Brain microvascular endothelial cell (primary cell): ENCODE measurements at regions of chr3 and their contacts with region 1.

Region 1: GRCh38 chr3:159616212-159616825 is 372.3 kb upstream of the IL12A start:
- DNase-seq: peak; percentile 65
- H3K4me3 ChIP-seq: no peak overlapping the region
- H3K27ac ChIP-seq: no peak overlapping the region
- H3K27me3 ChIP-seq: no peaks in the 10 kb centered on the region
- CTCF ChIP-seq: peak; percentile 78

Region 2: DNA sequence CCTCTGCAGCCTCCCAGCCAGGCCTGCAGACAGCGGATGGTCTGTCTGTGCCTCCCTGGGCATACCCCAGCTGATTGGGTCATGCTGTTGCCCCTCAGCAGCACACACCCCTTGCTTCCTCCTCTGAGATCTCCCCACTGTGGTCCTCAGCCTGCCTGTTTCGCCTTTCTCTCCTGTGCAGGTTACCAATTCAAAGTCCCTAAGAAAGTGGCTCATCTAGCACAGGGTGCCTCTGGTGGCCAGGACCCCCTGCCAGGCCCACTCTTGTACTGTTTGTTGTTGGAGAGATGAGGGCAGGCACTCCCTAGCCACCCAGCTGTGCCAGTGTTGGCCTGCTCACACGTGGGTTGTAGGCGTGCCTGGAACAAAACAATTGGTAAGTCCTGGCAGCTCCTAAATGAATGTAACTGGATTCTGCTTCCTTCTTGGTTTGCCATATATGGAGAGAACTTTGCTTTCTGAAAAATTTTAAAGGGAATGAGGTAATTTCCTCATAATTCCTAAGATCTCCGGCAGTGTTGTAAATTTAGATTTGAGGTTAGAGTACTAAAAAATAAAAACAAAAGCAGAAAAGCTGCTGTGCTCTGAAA is 159.1 kb after region 1 on chr3:
- in situ Hi-C with region 1: loop called (anchors 25 kb)
- DNase-seq: peak; percentile 63
- H3K4me3 ChIP-seq: no peak overlapping the region
- H3K27ac ChIP-seq: peak overlapping the region; percentile 78
- H3K27me3 ChIP-seq: no peaks in the 10 kb centered on the region
- CTCF ChIP-seq: no peak

Region 3: GRCh38 chr3:160163229-160163878 is 547.0 kb after region 1 on chr3:
- in situ Hi-C with region 1: no loop called
- DNase-seq: no peak
- H3K4me3 ChIP-seq: no peak overlapping the region
- H3K27ac ChIP-seq: no peak overlapping the region
- H3K27me3 ChIP-seq: no peaks in the 10 kb centered on the region
- CTCF ChIP-seq: peak; percentile 39

Region 4: DNA sequence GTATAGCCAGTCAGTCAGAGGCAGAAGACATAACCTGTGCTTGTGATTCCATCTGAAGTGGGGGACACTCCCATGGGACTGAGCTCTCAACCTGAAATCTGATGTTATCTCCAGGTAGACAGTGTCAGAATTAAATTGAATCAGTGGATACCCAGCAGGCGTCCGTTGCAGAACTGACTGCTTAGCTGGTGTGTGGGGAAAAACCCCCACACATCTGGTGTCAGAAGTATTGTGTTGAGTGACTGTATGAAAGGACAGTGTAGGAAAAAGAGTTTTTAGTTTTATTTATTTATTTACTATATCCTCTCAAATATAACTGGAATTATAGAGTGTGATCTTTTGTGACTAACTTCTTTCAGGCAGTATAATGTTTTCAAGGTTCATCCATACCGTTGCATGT is 938.7 kb after region 1 on chr3:
- in situ Hi-C with region 1: no loop called
- DNase-seq: no peak
- H3K4me3 ChIP-seq: no peak overlapping the region
- H3K27ac ChIP-seq: no peak overlapping the region
- H3K27me3 ChIP-seq: no peaks in the 10 kb centered on the region
- CTCF ChIP-seq: no peak